MCF 10A (cell line): ENCODE measurements at regions of chr13 and their contacts with region 1.

Region 1: DNA sequence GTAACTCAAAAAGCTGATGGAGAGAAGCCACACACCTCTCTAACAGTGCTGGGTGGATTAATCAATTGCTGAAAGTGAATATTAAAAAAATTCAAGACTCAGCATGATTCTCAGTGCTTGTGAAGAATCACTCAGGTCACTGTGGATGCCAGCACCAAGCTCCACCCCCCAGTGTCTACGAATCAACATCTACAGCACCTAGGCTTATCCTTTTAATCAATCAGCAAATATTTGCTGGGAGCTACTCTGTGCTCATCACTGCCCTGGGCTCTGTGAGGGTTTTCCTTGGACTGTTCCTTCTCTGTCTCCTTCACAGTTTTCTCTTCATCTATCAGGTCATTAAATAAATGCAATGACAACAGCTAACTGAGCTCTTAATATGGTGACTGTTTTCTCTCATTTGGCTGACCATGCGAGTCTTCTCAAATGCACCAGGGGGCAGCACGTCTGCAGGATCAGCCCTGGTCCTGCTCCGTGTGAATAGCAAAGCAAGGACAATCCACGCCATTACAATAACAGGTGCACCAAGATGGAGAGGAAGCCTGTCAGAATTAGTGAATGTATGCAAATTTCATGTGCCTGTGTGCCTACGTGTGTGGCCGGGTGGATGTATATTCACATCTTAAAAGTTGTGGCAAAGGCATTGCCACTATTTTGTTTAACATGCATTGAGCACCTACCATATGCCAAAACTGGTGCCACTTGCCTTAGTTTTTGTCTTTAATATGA is 14.6 kb upstream of the C13orf42 start:
- DNase-seq: peak; percentile 70
- H3K4me3 Mint-ChIP-seq: no peak overlapping the region
- H3K27ac Mint-ChIP-seq: no peak overlapping the region
- H3K4me1 Mint-ChIP-seq: no peaks in the 10 kb centered on the region
- H3K27me3 Mint-ChIP-seq: peaks cover 32% of the 10 kb centered on the region
- CTCF ChIP-seq: peak; percentile 76

Region 2: DNA sequence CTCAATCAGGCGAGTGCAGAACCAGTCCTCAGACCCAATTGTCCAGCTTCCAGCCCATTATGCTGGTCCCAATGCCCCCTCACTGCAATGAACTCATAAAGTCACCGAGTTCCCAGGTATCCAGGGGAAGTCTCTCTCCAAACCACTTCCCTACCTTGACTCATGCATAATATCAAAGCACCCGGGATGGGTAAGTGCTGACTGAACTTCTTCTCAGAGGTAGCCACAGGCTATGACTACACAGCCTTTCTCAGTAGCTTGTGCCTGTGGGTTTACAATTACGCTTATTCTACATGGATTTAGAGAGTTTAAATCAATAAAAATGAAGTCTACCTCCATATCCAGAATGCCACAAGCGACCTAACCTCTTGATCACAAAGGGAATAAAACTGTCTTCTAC is 12.9 kb before region 1 on chr13:
- CTCF ChIA-PET with region 1: interaction called, 18 read pairs
- POLR2A ChIA-PET with region 1: no interaction called
- intact Hi-C with region 1: no loop called
- DNase-seq: no peak
- H3K4me3 Mint-ChIP-seq: no peak overlapping the region
- H3K27ac Mint-ChIP-seq: no peak overlapping the region
- H3K4me1 Mint-ChIP-seq: no peaks in the 10 kb centered on the region
- H3K27me3 Mint-ChIP-seq: peaks cover 48% of the 10 kb centered on the region
- CTCF ChIP-seq: no peak

Region 3: GRCh38 chr13:51148952-51149573 is 23.4 kb after region 1 on chr13:
- CTCF ChIA-PET with region 1: interaction called, 15 read pairs
- POLR2A ChIA-PET with region 1: interaction called, 3 read pairs
- intact Hi-C with region 1: no loop called
- DNase-seq: peak; percentile 38
- H3K4me3 Mint-ChIP-seq: no peak overlapping the region
- H3K27ac Mint-ChIP-seq: no peak overlapping the region
- H3K4me1 Mint-ChIP-seq: no peaks in the 10 kb centered on the region
- H3K27me3 Mint-ChIP-seq: peaks cover 96% of the 10 kb centered on the region
- CTCF ChIP-seq: peak; percentile 53

Region 4: DNA sequence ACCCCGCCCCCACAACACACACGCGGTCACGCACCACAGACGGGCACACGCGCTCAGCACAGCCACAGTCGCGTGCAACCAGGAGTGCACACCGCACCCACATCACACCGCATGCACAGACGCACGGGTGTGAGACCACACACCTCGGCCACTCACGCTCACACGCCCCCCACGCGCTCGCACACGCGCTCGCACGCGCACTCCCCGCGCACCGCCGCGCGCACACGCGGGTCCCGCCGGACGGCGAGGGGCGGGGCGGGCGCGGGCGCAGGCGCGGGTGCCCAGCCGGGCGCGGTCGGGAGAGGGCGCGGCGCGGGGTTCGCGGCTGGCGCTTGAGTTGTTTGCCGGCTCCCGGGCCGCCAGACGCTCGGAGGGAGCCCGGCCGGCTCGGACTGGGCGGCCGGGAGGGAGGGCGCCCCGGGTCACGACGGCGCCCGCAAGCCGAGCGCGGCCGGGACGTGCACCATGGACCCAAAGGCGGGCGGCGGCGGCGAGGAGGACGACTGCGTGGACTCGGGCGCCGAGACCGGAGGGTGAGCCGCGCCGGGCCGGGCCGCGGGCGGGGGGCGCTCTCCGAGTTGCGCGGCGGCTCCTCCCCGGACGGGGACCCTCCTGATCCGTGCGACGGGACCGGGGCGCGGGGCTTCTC is 96.5 kb after region 1 on chr13 and contains the start of gene FAM124A:
- CTCF ChIA-PET with region 1: interaction called, 10 read pairs
- POLR2A ChIA-PET with region 1: no interaction called
- intact Hi-C with region 1: no loop called
- DNase-seq: peak; percentile 53
- H3K4me3 Mint-ChIP-seq: peak within 1 kb of the TSS; percentile 62
- H3K27ac Mint-ChIP-seq: no peak within 1 kb of the TSS
- H3K4me1 Mint-ChIP-seq: peaks cover 6% of the 10 kb centered on the region
- H3K27me3 Mint-ChIP-seq: peaks cover 20% of the 10 kb centered on the region
- CTCF ChIP-seq: peak; percentile 15
- total RNA-seq, gene FAM124A: 0.12 and 0.15 TPM in 2 replicates

Region 5: GRCh38 chr13:51534041-51534817 is 408.6 kb after region 1 on chr13:
- CTCF ChIA-PET with region 1: no interaction called
- POLR2A ChIA-PET with region 1: no interaction called
- intact Hi-C with region 1: no loop called
- DNase-seq: peak; percentile 62
- H3K4me3 Mint-ChIP-seq: no peak overlapping the region
- H3K27ac Mint-ChIP-seq: peak overlapping the region; percentile 89
- H3K4me1 Mint-ChIP-seq: peaks cover 13% of the 10 kb centered on the region
- H3K27me3 Mint-ChIP-seq: no peaks in the 10 kb centered on the region
- CTCF ChIP-seq: no peak